Sciatic nerve (tissue), 2 donors: ENCODE measurements at regions of chr1 and their contacts with region 1.

Region 1: GRCh38 chr1:27489910-27490741 is at the start of gene WASF2:
- DNase-seq: peak; percentile 98
- ATAC-seq: peak; percentile 97
- total RNA-seq, gene WASF2: 183 TPM

Region 2: DNA sequence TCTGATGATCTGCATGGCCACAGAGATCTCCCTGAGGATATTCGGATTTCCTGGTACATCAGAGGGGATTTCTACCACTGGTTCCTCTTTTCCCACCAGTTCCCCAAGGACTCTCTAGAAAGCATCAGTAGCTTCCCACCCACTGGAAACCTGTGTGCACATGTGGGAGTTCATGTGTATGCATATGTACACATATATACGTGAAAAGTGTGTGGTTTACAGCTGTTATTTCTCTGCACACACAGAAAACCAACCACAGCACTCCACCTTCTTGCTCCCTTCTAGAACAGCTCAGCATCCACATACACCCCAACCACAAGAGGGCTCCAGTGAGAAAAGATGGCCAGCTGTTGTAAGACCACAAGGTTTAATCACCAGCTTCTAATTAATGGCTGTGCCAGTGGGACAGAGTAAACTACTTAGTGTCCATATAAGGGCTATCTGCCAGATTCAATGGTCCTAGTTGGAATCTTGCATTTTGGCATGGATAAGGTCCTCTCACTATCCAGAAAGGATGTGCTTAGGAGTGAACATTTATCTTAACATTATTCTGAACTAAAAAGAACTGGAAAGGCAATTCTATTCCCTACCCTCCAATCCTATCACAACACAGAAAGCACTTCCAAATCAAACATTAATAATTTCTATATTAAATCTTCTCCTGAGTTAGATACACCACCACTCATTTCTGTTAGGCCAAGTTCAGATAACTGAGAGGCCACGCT is 73.6 kb before region 1 on chr1:
- intact Hi-C with region 1: loop called (anchors 10 kb)
- DNase-seq: no peak
- ATAC-seq: peak; percentile 30

Region 3: GRCh38 chr1:27603681-27604578 is 113.8 kb after region 1 on chr1 and contains the start of gene AHDC1:
- intact Hi-C with region 1: loop called (anchors 10 kb)
- DNase-seq: peak; percentile 96
- ATAC-seq: peak; percentile 64
- total RNA-seq, gene AHDC1: 61.9 TPM